Activated CD4-positive, alpha-beta T cell treated with anti-CD3 and anti-CD28 coated beads, Interleukin-2, amount 10 ng/mL, durations not matched to agents 24 days and 14 days (primary cell): ENCODE measurements at regions of chr10 and their contacts with region 1.

Region 1: GRCh38 chr10:31759799-31760626 is 168.6 kb downstream of the ARHGAP12 start:
- DNase-seq: peak; percentile 98
- H3K4me3 Mint-ChIP-seq: peak overlapping the region; percentile 96
- H3K27ac Mint-ChIP-seq: peak overlapping the region; percentile 91
- H3K4me1 Mint-ChIP-seq: peaks cover 12% of the 10 kb centered on the region
- H3K27me3 Mint-ChIP-seq: no peaks in the 10 kb centered on the region

Region 2: DNA sequence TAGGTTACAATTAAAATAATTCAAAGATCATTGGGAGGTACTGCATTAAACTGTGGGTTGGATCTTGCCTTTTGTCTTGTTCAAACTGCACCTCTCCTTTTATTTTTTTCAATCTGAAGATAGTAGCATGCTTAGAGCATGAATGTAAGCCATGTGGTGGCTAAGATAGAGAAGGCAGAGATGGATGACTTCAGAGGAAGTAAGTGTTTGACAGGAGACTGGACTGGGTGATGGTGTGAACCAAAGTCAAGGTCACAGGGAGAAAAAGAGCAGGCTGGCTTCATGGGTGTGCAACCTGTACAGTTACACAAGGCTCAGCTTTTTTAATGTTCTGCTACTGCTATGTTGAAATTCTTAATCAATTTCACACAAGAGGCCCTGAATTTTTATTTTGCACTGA is 355.4 kb before region 1 on chr10:
- intact Hi-C with region 1: no loop called
- DNase-seq: no peak
- H3K4me3 Mint-ChIP-seq: no peak overlapping the region
- H3K27ac Mint-ChIP-seq: peak overlapping the region; percentile 9
- H3K4me1 Mint-ChIP-seq: peaks cover 19% of the 10 kb centered on the region
- H3K27me3 Mint-ChIP-seq: no peaks in the 10 kb centered on the region

Region 3: GRCh38 chr10:31477584-31477983 is 282.4 kb before region 1 on chr10:
- intact Hi-C with region 1: no loop called
- DNase-seq: no peak
- H3K4me3 Mint-ChIP-seq: no peak overlapping the region
- H3K27ac Mint-ChIP-seq: no peak overlapping the region
- H3K4me1 Mint-ChIP-seq: no peaks in the 10 kb centered on the region
- H3K27me3 Mint-ChIP-seq: no peaks in the 10 kb centered on the region

Region 4: DNA sequence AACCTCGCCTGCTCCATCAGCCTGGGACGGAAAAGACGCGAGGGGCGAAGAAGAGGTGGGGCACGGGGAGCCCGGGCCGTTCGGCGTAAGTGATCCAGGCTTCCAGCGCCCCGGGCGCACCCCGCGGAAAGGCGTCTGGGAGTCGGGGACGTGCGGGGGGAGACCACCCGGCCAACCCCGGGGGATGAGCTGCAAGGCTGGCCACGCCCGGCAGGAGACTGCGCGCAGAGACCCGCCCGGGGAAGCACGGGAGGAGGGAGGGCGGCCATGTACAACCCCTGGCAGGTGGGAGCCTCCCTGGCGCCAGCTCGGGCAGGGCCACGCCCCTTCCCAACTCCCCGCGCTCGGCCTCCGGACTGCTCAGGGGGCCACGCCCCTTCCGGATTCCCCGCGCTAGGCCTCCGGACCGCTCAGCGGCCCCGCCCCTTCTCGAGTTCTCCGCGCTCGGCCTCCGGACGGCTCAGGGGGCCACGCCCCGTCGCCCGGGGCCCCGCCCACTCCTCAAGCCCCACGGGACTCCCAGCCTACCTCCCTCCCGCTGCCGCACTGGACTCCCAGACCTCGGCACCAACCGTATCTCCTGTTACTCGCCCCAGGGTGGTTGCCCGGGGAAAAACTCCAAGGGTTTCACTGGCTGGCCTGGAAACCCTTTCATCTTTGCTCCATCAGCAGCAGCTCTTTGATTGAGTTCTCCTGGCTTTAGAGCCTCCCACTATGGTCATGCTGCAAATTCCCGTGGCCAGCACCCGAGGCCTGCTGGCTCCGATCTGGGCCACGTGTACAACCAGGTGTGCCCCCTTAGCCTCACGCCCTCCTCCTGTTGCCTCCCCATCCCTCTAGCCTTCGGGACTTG is 156.6 kb before region 1 on chr10:
- intact Hi-C with region 1: loop called (anchors 1 kb)
- DNase-seq: peak; percentile 95
- H3K4me3 Mint-ChIP-seq: peak overlapping the region; percentile 88
- H3K27ac Mint-ChIP-seq: no peak overlapping the region
- H3K4me1 Mint-ChIP-seq: peaks cover 26% of the 10 kb centered on the region
- H3K27me3 Mint-ChIP-seq: peaks cover 3% of the 10 kb centered on the region

Region 5: DNA sequence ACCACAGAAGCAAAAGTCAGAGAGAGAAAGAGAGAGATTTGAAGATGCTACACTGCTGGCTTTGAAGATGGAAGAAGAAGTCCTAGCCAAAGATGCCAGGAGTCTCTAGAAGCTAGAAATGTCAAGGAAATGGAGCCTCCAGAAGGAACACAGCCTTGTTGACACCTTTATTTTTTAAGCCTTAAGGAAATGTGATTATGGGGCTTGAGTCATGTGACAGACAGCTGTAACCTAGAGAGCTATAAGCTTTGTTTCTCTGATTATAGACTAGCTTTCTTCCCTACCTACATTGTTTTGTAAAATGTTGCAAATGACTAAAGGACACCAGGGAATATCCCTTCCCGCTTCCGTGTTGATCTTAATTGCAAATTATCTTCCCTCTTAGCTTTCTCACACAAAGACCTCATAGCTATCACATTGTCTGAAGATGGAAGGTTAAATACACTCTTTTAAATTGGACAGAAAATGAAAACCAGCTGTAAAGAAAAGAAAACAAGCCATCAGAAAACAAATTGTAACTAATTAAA is 31.3 kb before region 1 on chr10:
- intact Hi-C with region 1: no loop called
- DNase-seq: no peak
- H3K4me3 Mint-ChIP-seq: no peak overlapping the region
- H3K27ac Mint-ChIP-seq: no peak overlapping the region
- H3K4me1 Mint-ChIP-seq: peaks cover 3% of the 10 kb centered on the region
- H3K27me3 Mint-ChIP-seq: peaks cover 12% of the 10 kb centered on the region

Region 6: DNA sequence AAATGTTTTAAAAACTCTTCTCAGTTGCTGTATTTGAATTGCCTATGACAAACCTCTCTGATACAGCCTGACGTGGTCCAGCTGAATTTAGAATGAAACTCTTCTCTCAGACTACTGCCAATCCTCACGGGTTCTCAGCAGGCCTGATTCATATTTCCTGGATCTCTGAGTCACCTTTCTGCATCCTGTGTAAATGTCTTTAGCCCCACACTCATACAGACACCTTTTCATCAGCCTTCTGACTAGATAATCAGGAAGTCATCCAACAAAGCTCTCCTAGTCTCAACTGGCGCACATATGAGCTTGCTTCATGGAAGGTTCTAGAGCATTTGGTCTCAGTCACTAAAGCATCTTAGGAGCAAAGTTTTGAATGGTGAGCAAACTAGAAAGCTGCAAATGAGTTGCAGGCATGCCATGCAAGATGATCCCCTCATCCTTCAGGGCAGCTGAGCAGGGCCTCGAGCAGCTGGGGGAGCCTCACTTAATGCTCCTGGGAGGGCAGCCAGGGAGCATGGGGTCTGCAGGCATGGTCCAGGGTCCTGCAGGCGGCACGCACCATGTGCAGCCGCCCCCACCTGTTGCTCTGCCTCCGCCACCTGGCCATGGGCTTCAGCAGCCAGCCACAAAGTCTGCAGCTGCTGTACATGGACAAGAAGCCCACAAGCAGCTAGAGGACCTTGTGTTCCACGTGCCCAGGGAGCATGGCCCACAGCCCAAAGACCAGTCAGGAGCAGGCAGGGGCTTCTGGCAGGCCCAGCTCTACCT is 14.2 kb before region 1 on chr10:
- intact Hi-C with region 1: loop called (anchors 1 kb)
- DNase-seq: peak; percentile 84
- H3K4me3 Mint-ChIP-seq: no peak overlapping the region
- H3K27ac Mint-ChIP-seq: peak overlapping the region; percentile 79
- H3K4me1 Mint-ChIP-seq: peaks cover 27% of the 10 kb centered on the region
- H3K27me3 Mint-ChIP-seq: no peaks in the 10 kb centered on the region